A673 (cell line): ENCODE measurements at regions of chr15 and their contacts with region 1.

Region 1: GRCh38 chr15:51162865-51163762 is 68.4 kb upstream of the TNFAIP8L3 start:
- DNase-seq: peak; percentile 78
- H3K4me3 ChIP-seq: peak overlapping the region; percentile 7
- H3K27ac ChIP-seq: no peak overlapping the region
- H3K4me1 ChIP-seq: peaks cover 5% of the 10 kb centered on the region
- H3K27me3 ChIP-seq: peaks cover 11% of the 10 kb centered on the region
- CTCF ChIP-seq: peak; percentile 95

Region 2: GRCh38 chr15:51192521-51193280 is 29.6 kb after region 1 on chr15:
- CTCF ChIA-PET with region 1: interaction called, 38 read pairs
- POLR2A ChIA-PET with region 1: interaction called, 3 read pairs
- intact Hi-C with region 1: loop called (anchors 1 kb)
- DNase-seq: peak; percentile 88
- H3K4me3 ChIP-seq: no peak overlapping the region
- H3K27ac ChIP-seq: no peak overlapping the region
- H3K4me1 ChIP-seq: no peaks in the 10 kb centered on the region
- H3K27me3 ChIP-seq: peaks cover 30% of the 10 kb centered on the region
- CTCF ChIP-seq: peak; percentile 94

Region 3: DNA sequence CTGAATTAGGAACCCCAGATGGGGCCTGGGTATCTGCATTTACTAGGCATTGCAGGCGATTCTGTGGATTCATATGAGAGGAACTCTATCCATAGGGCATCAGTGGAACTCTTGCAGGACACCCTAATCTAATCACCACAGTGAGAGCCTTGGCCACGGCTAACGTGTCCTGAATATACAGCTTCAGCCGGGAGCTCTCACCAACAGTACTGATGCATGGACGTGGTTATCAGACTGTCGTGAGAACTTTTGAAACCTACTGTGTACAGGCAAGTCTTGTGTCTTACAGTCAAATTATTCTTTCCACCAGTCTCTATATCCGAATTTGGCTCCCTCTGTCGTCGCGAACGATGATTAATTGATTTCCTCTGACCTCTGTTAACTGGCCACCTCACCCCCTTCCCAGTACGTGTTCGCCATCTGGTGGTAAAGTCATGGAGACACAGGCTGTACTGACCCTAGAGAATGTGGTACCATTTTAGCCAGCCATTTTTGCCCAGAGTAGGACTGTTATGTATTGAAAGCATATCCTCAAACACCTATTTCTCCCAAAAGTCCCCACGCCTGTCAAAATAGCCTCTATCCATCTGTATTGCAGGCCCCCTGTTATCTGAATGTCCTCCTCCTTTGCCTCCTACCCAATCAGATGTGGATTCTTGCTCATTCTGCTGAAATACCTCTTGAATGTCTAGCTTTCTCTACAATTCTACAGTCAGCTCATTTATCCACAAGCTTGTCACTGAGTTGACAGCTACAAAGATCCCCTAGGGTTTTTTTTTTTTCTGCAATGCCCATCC is 218.1 kb after region 1 on chr15:
- CTCF ChIA-PET with region 1: interaction called, 7 read pairs
- POLR2A ChIA-PET with region 1: no interaction called
- intact Hi-C with region 1: loop called (anchors 1 kb)
- DNase-seq: peak; percentile 62
- H3K4me3 ChIP-seq: no peak overlapping the region
- H3K27ac ChIP-seq: no peak overlapping the region
- H3K4me1 ChIP-seq: no peaks in the 10 kb centered on the region
- H3K27me3 ChIP-seq: no peaks in the 10 kb centered on the region
- CTCF ChIP-seq: peak; percentile 77

Region 4: DNA sequence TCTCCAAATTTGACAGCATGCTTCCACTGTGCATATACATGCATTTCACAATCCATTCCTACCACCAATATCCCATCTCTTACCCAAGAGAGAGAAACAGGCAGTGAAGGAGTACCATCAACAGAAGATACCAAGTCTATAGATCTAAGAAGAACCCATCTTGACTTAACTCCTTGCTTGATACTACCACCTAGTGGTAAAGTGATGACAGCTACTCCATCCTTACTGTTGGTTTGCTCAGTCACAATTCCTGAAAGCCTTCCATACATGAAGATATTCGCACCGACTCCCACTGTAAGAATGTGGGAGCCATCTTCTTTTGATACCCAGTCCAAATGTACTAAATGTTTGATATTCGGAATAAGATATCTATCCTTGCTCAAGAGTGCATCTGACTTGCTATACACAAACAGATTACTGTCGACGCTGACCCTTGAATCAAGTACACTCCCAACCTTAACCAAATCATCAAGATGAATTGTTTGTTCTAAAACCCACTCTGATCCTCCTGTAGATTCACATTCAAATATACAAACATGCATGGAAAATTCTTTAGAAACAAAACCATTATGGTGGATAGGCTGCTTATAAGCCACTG is 336.4 kb after region 1 on chr15:
- CTCF ChIA-PET with region 1: interaction called, 3 read pairs
- POLR2A ChIA-PET with region 1: no interaction called
- intact Hi-C with region 1: loop called (anchors 10 kb)
- DNase-seq: peak; percentile 70
- H3K4me3 ChIP-seq: no peak overlapping the region
- H3K27ac ChIP-seq: no peak overlapping the region
- H3K4me1 ChIP-seq: no peaks in the 10 kb centered on the region
- H3K27me3 ChIP-seq: no peaks in the 10 kb centered on the region
- CTCF ChIP-seq: peak; percentile 77